ENCODE measurements at regions of chr11 and their contacts with region 1.

Region 1: GRCh38 chr11:61827571-61828378 is at the start of gene FADS2:
- DNase-seq: peak; percentile 75 to 85
- H3K4me3 ChIP-seq: peak within 1 kb of the TSS; percentile 1 to 42 (median 42)
- H3K27ac ChIP-seq: peak within 1 kb of the TSS; percentile 32 to 60 (median 51)
- H3K4me1 ChIP-seq: peaks cover 22 to 29% of the 10 kb centered on the region in 2 donors
- H3K27me3 ChIP-seq: no peaks in the 10 kb centered on the region
- CTCF ChIP-seq: peak in 1 of 6 experiments; percentile 10
- POLR2A ChIP-seq: peak in 1 of 2 donors; percentile 17
- total RNA-seq, gene FADS2: 2.8 to 9.3 (median 7.0) TPM

Region 2: DNA sequence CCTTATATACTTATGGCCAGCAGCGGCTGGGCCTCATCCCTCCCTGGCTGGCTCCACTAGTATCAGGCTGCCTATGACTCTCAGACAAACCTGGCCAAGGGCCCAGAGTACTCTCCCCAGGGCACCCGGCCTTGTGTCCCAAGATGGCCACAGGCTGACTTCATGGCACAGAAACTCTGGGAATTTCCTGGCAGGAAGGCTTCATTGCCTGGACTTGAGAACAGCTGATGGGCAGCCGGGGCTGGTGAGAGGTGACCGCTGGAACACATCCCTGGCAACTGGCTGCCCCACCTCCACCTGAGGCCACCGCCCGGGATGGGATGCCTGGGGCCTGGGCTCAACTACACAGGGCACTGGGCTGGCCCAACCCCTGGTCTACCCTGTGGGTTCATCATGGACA is 60.3 kb after region 1 on chr11:
- intact Hi-C with region 1: loop called (anchors 5 kb)
- DNase-seq: peak; percentile 84 to 92
- H3K4me3 ChIP-seq: no peak overlapping the region
- H3K27ac ChIP-seq: peak overlapping the region in 1 of 3 donors; percentile 57
- H3K4me1 ChIP-seq: peaks cover 8 to 30% of the 10 kb centered on the region in 2 donors
- H3K27me3 ChIP-seq: no peaks in the 10 kb centered on the region
- CTCF ChIP-seq: no peak
- POLR2A ChIP-seq: no peak